Activated T-helper 1 cell treated with anti-CD3 and anti-CD28 coated beads, Interleukin-12 subunit alpha, Interleukin-12 subunit beta, Interleukin-2, Interleukin-4 antibody, amounts not matched to agents 30 ng/mL and 10 ng/mL and 1 ng/mL, durations not matched to agents 14 hours and 24 hours and 36 hours (primary cell): ENCODE measurements at regions of chr9 and their contacts with region 1.

Region 1: DNA sequence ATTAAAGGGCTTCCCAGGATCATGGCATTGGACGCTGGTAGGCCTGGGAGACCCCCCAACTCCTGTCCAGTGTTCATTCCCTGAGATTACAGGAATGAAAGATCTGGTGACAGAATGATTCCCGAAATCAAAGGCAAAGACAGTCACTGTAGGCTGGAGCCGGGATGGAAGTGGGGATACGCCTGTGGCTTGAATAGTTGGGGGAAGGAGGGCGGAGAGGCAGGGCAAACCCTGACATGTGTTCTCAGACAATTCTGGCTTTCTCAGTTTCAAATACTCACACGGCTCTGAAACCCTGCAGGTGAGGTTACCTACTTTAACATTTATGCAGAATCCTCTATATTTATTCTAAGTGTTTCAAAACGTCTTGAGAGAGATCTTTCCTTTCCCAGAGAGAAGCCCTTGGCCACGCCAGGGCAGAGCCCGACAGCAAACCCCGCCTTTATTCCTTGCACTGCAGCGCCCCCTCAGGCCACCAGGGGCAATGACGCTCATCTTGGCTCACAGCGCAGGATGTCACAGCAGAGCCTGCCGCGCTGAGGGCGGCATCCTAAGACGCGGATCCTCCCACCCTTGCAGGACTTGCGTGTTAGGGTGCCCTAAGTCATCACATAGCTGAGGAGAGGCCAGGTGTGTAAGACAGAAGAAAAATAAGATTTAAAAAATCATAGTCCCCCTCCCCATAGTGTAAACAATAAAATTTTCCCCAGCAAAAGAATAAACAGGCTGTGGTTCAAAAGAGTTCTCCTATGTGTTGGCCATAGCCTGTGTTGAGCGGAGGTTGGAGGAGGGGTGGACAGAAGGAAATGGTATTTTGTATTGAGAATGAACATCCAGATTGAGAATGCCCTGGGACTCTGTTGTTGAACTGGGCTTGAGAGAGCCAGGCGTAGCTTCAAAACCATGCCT is 284.5 kb downstream of the NTRK2 start:
- DNase-seq: peak; percentile 39
- H3K4me3 Mint-ChIP-seq: no peak overlapping the region
- H3K27ac Mint-ChIP-seq: no peak overlapping the region
- H3K4me1 Mint-ChIP-seq: peaks cover 7% of the 10 kb centered on the region
- H3K27me3 Mint-ChIP-seq: no peaks in the 10 kb centered on the region

Region 2: DNA sequence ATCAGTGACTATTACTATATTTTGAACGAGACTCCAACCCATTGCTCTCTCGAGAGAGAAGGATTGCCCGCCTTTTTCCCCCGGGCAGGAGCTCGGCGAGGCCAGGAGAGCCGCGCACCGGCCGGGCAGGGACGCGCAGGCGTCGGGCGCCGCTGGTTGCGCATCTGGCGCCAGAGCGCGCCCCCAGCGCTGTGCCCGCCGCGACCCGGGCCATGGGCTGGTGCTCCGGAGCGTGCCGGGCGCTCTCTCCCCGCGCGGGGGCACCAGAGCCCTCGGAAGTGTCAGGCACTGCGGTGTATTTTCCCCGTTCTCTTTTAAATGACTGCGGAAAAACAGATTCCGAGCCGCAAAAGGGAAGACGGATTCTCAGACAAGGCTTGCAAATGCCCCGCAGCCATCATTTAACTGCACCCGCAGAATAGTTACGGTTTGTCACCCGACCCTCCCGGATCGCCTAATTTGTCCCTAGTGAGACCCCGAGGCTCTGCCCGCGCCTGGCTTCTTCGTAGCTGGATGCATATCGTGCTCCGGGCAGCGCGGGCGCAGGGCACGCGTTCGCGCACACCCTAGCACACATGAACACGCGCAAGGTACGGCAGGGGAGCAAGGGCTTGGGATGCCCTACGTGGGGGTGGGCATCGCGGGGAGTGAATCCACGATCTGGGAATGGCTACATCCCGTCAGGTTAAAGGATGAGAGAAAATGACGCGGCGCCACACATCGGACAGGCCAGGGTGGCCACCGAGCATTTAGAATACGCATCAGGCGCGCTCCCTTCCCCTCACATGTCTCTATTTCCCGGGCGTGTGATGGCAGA is 285.6 kb before region 1 on chr9:
- intact Hi-C with region 1: loop called (anchors 1 kb)
- DNase-seq: peak; percentile 21
- H3K4me3 Mint-ChIP-seq: peak overlapping the region; percentile 70
- H3K27ac Mint-ChIP-seq: peak overlapping the region; percentile 38
- H3K4me1 Mint-ChIP-seq: peaks cover 16% of the 10 kb centered on the region
- H3K27me3 Mint-ChIP-seq: peaks cover 56% of the 10 kb centered on the region

Region 3: DNA sequence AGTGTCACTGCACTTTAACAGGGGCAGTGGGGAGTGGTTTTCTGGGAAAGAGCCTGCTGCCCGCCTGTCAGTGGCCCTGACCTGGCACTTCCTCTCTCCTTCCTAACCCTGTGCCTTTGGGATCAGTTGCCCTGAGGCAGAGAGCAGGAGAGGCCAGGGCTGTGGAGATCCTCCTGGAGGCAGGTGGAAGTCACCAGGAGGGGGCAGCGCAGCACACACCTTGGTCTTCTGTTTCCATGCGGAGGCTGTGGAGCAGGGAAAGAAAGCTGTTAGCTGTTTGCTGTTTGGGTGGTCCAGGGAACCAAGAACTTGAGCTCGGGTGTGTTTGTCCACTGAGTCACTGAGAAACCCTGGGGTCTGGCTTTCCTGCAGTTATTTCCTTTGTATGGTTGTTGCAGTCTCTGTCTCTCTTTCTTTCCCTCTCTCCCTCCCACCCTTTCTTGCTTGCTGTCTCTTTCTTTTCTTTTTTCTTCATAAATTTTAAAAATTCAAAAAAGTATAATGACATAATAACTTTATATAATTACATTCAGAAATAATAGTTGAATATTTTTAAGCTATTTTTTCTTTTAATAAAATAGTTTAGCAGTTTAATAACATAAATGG is 256.4 kb before region 1 on chr9:
- intact Hi-C with region 1: loop called (anchors 1 kb)
- DNase-seq: peak; percentile 24
- H3K4me3 Mint-ChIP-seq: no peak overlapping the region
- H3K27ac Mint-ChIP-seq: no peak overlapping the region
- H3K4me1 Mint-ChIP-seq: peaks cover 22% of the 10 kb centered on the region
- H3K27me3 Mint-ChIP-seq: peaks cover 4% of the 10 kb centered on the region

Region 4: DNA sequence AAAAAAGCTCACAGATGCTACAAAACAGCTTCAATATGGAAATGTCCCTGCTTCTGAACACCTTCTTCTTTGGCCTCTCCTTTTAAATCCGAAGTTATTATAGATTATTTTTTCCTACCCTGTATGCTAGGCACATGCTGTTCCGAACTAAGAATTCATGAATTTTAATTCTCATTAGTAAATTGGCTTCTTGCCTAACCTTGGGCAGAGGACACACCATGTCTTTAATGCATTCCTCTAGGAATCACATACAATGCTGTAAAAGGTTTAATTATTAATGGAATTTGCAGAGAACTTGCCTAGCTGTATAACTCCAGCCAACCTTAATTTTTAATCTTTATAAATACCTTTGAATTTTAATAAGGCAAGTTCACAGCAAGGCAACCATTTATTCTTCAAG is 50.1 kb before region 1 on chr9:
- intact Hi-C with region 1: no loop called
- DNase-seq: no peak
- H3K4me3 Mint-ChIP-seq: no peak overlapping the region
- H3K27ac Mint-ChIP-seq: no peak overlapping the region
- H3K4me1 Mint-ChIP-seq: no peaks in the 10 kb centered on the region
- H3K27me3 Mint-ChIP-seq: peaks cover 6% of the 10 kb centered on the region

Region 5: GRCh38 chr9:84917366-84918063 is 36.5 kb before region 1 on chr9:
- intact Hi-C with region 1: no loop called
- DNase-seq: no peak
- H3K4me3 Mint-ChIP-seq: no peak overlapping the region
- H3K27ac Mint-ChIP-seq: no peak overlapping the region
- H3K4me1 Mint-ChIP-seq: no peaks in the 10 kb centered on the region
- H3K27me3 Mint-ChIP-seq: no peaks in the 10 kb centered on the region